Dorsolateral prefrontal cortex (tissue), 120 donors: ENCODE measurements at regions of chr16 and their contacts with region 1.

Region 1: DNA sequence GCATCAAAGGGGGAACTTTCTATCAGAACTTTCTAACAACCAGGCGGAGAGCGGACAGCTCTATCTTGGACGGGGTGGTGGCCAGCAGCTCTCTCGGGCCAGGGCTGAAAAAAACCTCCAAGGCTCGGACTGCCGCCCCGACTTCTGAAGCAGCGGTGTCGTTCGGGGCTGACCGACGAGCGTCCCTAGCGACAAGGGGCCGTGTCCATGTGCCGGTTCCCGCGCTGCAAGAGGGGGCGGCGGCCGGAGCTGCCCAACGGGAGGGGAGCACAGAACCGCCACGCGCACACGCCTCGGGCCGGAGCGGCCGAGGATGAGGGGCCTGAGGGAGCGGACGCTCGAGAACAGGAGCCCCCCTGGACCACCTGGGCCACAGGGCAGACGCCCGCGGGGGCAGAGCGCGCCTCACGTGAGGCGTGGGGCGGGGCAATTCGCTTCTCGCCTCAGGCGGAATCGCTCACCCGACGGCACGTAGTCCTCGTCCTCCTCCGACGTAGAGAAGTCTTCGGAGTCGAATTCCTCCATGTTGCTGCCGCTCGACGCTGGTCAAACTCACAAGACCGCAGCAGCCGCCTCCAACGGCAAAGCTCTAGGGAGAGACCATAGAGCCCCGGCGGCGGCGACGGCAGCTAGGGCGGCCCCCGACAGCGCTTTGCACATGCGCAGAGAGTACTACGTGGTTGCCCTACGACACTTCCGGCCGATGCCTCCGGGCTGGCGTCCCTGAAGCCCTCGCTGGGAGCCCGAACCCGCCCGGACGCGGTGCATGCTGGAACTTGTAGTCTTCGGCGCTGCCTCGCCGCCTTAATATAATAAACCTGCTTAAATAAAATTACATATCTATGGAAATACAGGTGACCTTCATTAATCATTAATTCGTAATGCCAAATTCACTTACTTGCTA is at the start of gene CFDP1:
- DNase-seq: peak; percentile 92 to 97 (median 95)
- H3K4me3 ChIP-seq: peak within 1 kb of the TSS; percentile 67 to 100 (median 96)
- H3K27ac ChIP-seq: peak within 1 kb of the TSS; percentile 70 to 99 (median 95)
- H3K27me3 ChIP-seq: no peaks in the 10 kb centered on the region
- CTCF ChIP-seq: peak in 45 of 56 donors; percentile 5 to 65 (median 38)
- total RNA-seq, gene CFDP1: 37.5 to 79.2 (median 62.9) TPM

Region 2: GRCh38 chr16:74666425-74667254 is 766.4 kb before region 1 on chr16 and contains the start of gene RFWD3:
- intact Hi-C with region 1: loop called in 1 of 2 experiments (anchors 10 kb)
- DNase-seq: peak; percentile 90 to 99 (median 98)
- H3K4me3 ChIP-seq: peak within 1 kb of the TSS; percentile 55 to 99 (median 90)
- H3K27ac ChIP-seq: peak within 1 kb of the TSS in 39 of 59 donors; percentile 6 to 84 (median 50)
- H3K27me3 ChIP-seq: no peaks in the 10 kb centered on the region
- CTCF ChIP-seq: peak in 12 of 56 donors; percentile 7 to 35 (median 20)
- total RNA-seq, gene RFWD3: 8.3 to 26.1 (median 14.4) TPM

Region 3: GRCh38 chr16:75464130-75464918 is 31.2 kb after region 1 on chr16 and contains the start of gene TMEM170A:
- intact Hi-C with region 1: loop called (anchors 1 kb)
- DNase-seq: peak; percentile 97 to 99 (median 98)
- H3K4me3 ChIP-seq: peak within 1 kb of the TSS; percentile 68 to 99 (median 95)
- H3K27ac ChIP-seq: peak within 1 kb of the TSS; percentile 86 to 99 (median 96)
- H3K27me3 ChIP-seq: no peaks in the 10 kb centered on the region
- CTCF ChIP-seq: peak in 55 of 56 donors; percentile 99 to 100 (median 100)
- total RNA-seq, gene TMEM170A: 20.2 to 47.4 (median 29.5) TPM